Activated CD4-positive, alpha-beta T cell treated with anti-CD3 and anti-CD28 coated beads for 36 hours (primary cell): ENCODE measurements at regions of chr19 and their contacts with region 1.

Region 1: DNA sequence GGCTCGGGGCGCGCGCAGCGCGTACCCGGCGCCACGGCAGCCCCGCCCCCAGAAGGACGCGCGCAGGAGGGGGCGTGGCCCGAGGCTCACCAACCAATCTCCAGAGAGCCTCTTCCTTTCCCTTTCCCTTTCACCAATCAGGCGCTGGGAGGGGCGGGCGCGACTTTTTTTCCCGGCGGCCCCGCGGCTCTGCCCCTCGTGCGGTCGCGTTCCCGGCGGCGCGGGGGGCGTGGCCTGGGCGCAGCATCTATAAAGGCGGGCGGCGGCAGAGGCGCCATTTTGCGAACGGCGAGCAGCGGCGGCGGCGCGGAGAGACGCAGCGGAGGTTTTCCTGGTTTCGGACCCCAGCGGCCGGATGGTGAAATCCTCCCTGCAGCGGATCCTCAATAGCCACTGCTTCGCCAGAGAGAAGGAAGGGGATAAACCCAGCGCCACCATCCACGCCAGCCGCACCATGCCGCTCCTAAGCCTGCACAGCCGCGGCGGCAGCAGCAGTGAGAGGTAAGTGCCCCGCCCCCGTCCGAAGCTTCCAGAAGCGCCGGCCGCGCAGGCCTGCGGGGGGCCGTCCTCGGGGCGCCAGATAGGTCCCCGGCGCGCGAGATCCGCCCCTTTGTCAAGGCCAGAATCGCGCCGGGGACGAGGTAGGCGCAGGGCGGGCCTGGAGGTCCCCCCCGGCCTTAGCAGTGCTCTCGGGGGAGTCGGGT is 12.6 kb downstream of the PEAK3 start:
- DNase-seq: peak; percentile 99
- ATAC-seq: peak; percentile 81
- H3K4me3 Mint-ChIP-seq: peak overlapping the region; percentile 89
- H3K27ac Mint-ChIP-seq: peak overlapping the region; percentile 88
- H3K4me1 Mint-ChIP-seq: peaks cover 38% of the 10 kb centered on the region
- H3K27me3 Mint-ChIP-seq: no peaks in the 10 kb centered on the region

Region 2: DNA sequence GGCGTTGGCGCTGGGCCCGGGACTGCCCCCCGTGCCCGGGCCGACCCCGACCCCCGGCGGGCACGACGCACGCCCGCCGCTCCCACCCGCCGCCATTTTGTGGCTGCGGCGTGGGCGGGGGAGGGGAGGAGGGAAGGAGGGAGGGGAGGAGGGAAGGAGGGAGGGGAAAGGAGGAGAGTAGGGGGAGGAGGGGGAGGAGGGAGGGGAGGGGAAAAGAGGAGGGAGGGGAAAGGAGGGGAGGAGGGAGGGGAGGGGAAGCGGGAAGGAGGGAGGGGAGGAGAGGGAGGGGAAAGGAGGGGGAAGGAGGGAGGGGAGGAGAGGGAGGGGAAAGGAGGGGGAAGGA is 253.8 kb before region 1 on chr19 and contains the start of gene BTBD2:
- CTCF ChIA-PET with region 1: no interaction called
- POLR2A ChIA-PET with region 1: no interaction called
- intact Hi-C with region 1: no loop called
- DNase-seq: peak; percentile 80
- ATAC-seq: peak; percentile 9
- H3K4me3 Mint-ChIP-seq: peak within 1 kb of the TSS; percentile 69
- H3K27ac Mint-ChIP-seq: peak within 1 kb of the TSS; percentile 58
- H3K4me1 Mint-ChIP-seq: peaks cover 21% of the 10 kb centered on the region
- H3K27me3 Mint-ChIP-seq: no peaks in the 10 kb centered on the region
- total RNA-seq, gene BTBD2: 46.7 to 61.8 TPM

Region 3: GRCh38 chr19:2041683-2042484 is 227.5 kb before region 1 on chr19:
- CTCF ChIA-PET with region 1: no interaction called
- POLR2A ChIA-PET with region 1: no interaction called
- intact Hi-C with region 1: loop called in 1 of 2 experiments (anchors 2 kb)
- DNase-seq: peak; percentile 100
- ATAC-seq: peak; percentile 88
- H3K4me3 Mint-ChIP-seq: peak overlapping the region; percentile 73
- H3K27ac Mint-ChIP-seq: peak overlapping the region; percentile 88
- H3K4me1 Mint-ChIP-seq: peaks cover 17% of the 10 kb centered on the region
- H3K27me3 Mint-ChIP-seq: no peaks in the 10 kb centered on the region

Region 4: GRCh38 chr19:2253106-2254053 is 16.0 kb before region 1 on chr19:
- CTCF ChIA-PET with region 1: interaction called, 3 read pairs
- POLR2A ChIA-PET with region 1: interaction called, 3 read pairs
- intact Hi-C with region 1: loop called in 1 of 2 experiments (anchors 1 kb)
- DNase-seq: peak; percentile 69
- ATAC-seq: peak; percentile 23
- H3K4me3 Mint-ChIP-seq: peak overlapping the region; percentile 49
- H3K27ac Mint-ChIP-seq: no peak overlapping the region
- H3K4me1 Mint-ChIP-seq: peaks cover 24% of the 10 kb centered on the region
- H3K27me3 Mint-ChIP-seq: peaks cover 4% of the 10 kb centered on the region

Region 5: DNA sequence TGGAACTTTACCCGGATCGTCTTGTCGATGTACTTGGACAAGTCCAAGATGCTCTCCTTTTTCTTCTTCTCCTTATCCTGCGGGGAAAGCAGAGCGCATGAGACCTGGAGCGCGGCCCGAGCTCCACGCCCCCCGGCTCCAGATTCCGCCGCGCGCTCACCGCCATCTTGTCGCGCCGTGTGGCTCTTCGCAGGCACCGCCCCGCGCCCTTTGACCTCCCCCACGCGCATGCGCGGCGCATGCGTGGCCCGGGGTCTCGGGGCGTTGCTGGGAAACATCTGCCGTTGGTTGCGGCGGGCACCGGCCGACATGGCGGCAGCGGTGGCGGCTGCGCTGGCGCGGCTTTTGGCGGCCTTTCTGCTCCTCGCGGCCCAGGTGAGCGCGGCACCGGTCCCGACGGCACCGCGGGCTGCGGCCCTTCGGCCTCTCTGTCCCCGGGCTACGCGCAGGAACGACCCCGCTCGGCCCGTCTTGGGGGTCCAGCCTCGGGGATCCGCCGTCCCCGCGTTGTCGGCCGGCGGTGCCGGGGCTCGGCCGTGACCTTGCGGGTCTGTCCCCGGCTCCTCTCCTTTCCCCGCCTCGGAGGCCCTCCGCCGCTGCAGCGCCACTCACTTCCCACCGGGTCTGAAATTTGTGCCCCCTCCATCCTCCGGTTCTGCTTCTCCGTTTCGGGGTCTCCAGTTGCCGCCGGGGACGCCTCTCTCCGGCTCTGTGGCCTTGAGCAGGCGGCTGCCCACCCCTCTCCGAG is 59.2 kb after region 1 on chr19 and contains the starts of genes LSM7 and SPPL2B:
- CTCF ChIA-PET with region 1: no interaction called
- POLR2A ChIA-PET with region 1: no interaction called
- intact Hi-C with region 1: loop called in 1 of 2 experiments (anchors 1 kb)
- DNase-seq: peak; percentile 95
- ATAC-seq: peak; percentile 78
- H3K4me3 Mint-ChIP-seq: peak within 1 kb of the TSS; percentile 98
- H3K27ac Mint-ChIP-seq: peak within 1 kb of the TSS; percentile 99
- H3K4me1 Mint-ChIP-seq: peaks cover 69% of the 10 kb centered on the region
- H3K27me3 Mint-ChIP-seq: no peaks in the 10 kb centered on the region
- total RNA-seq, gene LSM7: 113 to 134 TPM
- total RNA-seq, gene SPPL2B: 37.7 to 48.5 TPM

Region 6: GRCh38 chr19:2391118-2391725 is 121.8 kb after region 1 on chr19:
- CTCF ChIA-PET with region 1: no interaction called
- POLR2A ChIA-PET with region 1: interaction called, 3 read pairs
- intact Hi-C with region 1: loop called (anchors 2 to 10 kb)
- DNase-seq: peak; percentile 57
- ATAC-seq: peak; percentile 80
- H3K4me3 Mint-ChIP-seq: no peak overlapping the region
- H3K27ac Mint-ChIP-seq: no peak overlapping the region
- H3K4me1 Mint-ChIP-seq: peaks cover 2% of the 10 kb centered on the region
- H3K27me3 Mint-ChIP-seq: peaks cover 2% of the 10 kb centered on the region

Region 7: DNA sequence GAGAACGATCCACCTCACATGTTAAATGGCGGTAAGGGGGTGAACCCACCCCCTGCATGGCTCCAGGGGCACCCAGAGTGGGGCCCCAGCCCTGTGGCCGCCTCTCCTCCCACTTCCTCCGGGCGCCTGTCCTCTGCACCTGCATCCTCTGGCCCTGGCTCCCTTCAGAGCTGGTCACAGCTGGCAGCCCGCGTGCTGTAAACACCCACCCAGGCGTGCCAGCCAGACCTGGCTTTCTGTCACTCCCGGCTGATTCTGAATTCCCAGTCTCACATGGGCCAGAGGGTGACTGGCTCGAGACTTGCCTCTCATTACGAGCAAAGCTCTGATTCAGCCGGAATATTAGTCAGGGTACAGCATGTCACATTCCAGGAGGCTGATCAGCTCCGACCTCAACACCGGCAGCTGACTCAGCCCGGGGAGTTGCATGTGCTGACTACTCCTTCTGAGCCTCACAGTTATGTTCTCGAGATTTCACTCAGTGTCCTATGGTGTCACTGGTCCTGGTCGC is 358.0 kb after region 1 on chr19:
- CTCF ChIA-PET with region 1: no interaction called
- POLR2A ChIA-PET with region 1: no interaction called
- intact Hi-C with region 1: loop called (anchors 5 to 10 kb)
- DNase-seq: peak; percentile 84
- ATAC-seq: peak; percentile 97
- H3K4me3 Mint-ChIP-seq: peak overlapping the region; percentile 38
- H3K27ac Mint-ChIP-seq: peak overlapping the region; percentile 81
- H3K4me1 Mint-ChIP-seq: peaks cover 39% of the 10 kb centered on the region
- H3K27me3 Mint-ChIP-seq: no peaks in the 10 kb centered on the region